ENCODE measurements at regions of chr14 and their contacts with region 1.

Region 1: DNA sequence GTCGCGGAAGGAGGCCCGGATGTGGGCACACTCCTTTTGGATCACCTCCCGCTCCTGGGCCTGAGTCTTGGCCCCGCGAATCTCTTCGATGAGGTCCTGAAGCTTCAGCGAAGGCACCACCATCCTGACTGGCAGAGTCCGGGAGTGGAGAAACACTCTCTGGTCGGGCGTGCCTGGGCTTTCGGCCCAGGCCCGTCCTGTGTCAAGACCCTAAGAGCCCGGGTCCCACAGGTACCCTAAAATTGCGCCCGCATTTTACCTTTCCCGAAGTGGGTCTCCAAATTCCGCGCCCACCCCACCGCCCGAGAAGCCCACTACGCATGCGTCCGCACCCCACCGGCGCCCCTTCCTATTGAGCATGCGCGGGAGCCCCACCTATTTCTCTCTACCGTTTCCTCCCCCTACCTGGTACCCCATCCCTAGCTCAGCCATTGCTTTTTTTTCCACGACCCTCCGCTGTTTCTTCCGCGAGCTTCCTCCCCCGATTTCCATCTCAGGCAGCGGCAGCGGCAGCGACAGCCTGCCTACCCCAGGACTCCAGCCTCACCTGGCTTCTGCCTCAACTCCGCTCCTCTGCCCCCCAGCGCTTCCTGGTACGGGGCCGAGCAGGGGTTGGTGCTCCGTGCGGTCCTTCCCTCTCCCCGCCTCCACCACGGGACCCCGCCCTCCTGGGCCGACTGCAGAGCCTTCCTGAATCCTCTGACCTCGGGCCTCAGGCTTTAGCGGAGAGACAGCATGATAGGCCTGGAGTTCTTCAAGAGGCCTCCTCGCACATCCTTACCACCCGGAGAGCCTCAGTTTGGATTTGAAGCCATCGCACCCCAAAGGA is at the start of gene AP1G2:
- DNase-seq: peak; percentile 69 to 94 (median 83)
- ATAC-seq: peak; percentile 91
- H3K4me3 ChIP-seq: peak within 1 kb of the TSS; percentile 75
- H3K4me3 Mint-ChIP-seq: peak within 1 kb of the TSS; percentile 99
- H3K27ac ChIP-seq: peak within 1 kb of the TSS; percentile 75 to 79
- H3K27ac Mint-ChIP-seq: peak within 1 kb of the TSS; percentile 96
- H3K4me1 ChIP-seq: peaks cover 40% of the 10 kb centered on the region
- H3K4me1 Mint-ChIP-seq: peaks cover 52% of the 10 kb centered on the region
- H3K27me3 ChIP-seq: no peaks in the 10 kb centered on the region
- H3K27me3 Mint-ChIP-seq: peaks cover 7% of the 10 kb centered on the region
- CTCF ChIP-seq: no peak
- total RNA-seq, gene AP1G2: 193 to 198 TPM

Region 2: DNA sequence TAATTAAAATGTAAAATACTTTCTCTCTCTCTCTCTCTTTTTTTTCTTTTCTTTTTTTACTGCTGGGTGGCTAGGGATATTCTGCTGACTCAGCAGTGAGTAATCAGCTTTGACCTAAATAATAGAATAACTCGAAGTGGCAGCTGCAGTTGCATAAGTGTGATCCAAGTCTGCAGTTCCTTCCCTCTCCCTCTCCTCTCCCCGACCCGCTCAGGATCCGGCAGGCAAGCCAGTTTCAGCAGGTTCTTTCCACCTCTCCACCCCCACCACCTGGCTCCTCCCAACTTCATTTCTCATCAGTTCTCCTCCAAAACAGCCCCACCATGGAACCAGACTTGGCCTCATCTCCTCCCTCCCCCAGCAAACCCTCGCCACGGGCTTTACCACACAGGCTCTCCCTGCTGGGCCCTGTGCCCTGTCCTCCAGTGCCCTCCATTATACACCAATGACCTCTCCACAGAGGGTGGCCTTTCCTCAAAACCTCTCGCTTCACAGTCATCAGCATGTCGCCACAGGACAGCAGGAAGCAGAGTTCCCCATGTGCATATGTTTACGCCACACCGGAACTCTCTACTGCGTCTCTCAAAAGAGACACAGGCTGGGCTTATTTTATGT is 406.4 kb before region 1 on chr14:
- CTCF ChIA-PET with region 1: no interaction called
- POLR2A ChIA-PET with region 1: no interaction called
- intact Hi-C with region 1: no loop called
- DNase-seq: peak in 3 of 14 experiments; percentile 12 to 62 (median 52)
- ATAC-seq: no peak
- H3K4me3 ChIP-seq: no peak overlapping the region
- H3K4me3 Mint-ChIP-seq: no peak overlapping the region
- H3K27ac ChIP-seq: no peak overlapping the region
- H3K27ac Mint-ChIP-seq: no peak overlapping the region
- H3K4me1 ChIP-seq: peaks cover 18% of the 10 kb centered on the region
- H3K4me1 Mint-ChIP-seq: peaks cover 14% of the 10 kb centered on the region
- H3K27me3 ChIP-seq: no peaks in the 10 kb centered on the region
- H3K27me3 Mint-ChIP-seq: no peaks in the 10 kb centered on the region
- CTCF ChIP-seq: no peak

Region 3: DNA sequence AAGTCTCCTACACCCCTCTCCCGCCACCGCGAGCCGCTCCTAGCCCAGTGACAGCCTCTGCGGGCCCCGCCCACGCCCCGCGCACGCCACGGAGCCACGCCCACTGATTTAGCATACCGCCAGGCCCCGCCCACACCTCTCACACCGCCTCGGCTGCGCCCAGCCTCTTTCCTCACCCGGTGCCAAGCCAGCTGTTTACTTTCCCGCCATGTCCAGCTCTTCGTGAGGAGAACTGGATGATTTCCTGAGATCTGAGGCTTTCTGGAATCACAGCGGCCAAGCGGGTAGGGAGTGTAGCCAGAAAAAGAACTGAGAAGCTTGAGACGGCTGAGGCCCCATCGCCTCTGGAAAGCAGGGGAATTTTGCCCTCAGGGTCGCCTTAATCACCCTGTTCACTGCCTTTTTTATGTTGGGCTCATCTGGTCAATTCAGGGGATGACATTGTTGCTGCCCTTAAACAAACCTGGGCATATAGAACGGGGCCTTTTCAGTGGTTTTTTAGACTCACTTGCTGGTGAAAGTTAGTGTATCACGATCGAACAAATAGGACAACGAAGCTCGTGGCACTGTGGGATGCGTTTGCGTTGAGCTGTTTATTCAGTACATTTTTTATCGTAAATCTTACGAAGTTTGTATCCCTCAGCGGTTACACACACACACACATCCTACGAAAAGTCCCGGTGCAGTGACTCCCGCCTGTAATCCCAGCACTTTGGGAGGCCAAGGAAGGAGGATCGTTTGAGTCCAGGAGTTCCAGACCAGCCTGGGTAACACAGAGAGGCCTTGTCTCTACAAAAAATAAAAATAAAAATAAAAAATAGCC is 329.4 kb before region 1 on chr14 and contains the start of gene RNF212B:
- CTCF ChIA-PET with region 1: no interaction called
- POLR2A ChIA-PET with region 1: no interaction called
- intact Hi-C with region 1: no loop called
- DNase-seq: peak; percentile 57 to 87 (median 72)
- ATAC-seq: peak; percentile 100
- H3K4me3 ChIP-seq: peak within 1 kb of the TSS; percentile 20
- H3K4me3 Mint-ChIP-seq: no peak within 1 kb of the TSS
- H3K27ac ChIP-seq: no peak within 1 kb of the TSS
- H3K27ac Mint-ChIP-seq: no peak within 1 kb of the TSS
- H3K4me1 ChIP-seq: peaks cover 8% of the 10 kb centered on the region
- H3K4me1 Mint-ChIP-seq: peaks cover 7% of the 10 kb centered on the region
- H3K27me3 ChIP-seq: peaks cover 0 to 10% of the 10 kb centered on the region in 2 experiments
- H3K27me3 Mint-ChIP-seq: peaks cover 46% of the 10 kb centered on the region
- CTCF ChIP-seq: no peak
- total RNA-seq, gene RNF212B: not detected

Region 4: GRCh38 chr14:23269193-23269592 is 298.2 kb before region 1 on chr14:
- CTCF ChIA-PET with region 1: no interaction called
- POLR2A ChIA-PET with region 1: no interaction called
- intact Hi-C with region 1: loop called in 1 of 2 experiments (anchors 5 kb)
- DNase-seq: no peak
- ATAC-seq: no peak
- H3K4me3 ChIP-seq: no peak overlapping the region
- H3K4me3 Mint-ChIP-seq: no peak overlapping the region
- H3K27ac ChIP-seq: no peak overlapping the region
- H3K27ac Mint-ChIP-seq: no peak overlapping the region
- H3K4me1 ChIP-seq: no peaks in the 10 kb centered on the region
- H3K4me1 Mint-ChIP-seq: no peaks in the 10 kb centered on the region
- H3K27me3 ChIP-seq: peaks cover 0 to 4% of the 10 kb centered on the region in 2 experiments
- H3K27me3 Mint-ChIP-seq: peaks cover 17% of the 10 kb centered on the region
- CTCF ChIP-seq: no peak

Region 5: DNA sequence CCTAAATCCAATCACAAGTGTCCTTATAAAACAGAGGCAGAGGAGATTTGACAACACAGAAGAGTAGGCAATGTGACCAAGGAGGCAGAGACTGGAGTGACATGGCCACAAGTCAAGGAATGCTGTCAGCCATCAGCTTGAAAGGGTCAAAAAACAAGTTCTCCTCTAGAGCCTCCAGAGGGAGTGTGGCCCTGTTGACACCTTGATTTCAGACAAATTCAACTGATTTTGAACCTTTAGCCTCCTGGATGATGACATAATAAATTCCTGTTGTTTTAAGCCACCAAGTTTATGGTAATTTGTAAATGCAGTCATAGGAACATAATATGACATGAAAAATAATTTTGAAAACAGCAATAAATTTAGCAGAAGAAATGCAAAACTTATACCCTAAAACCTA is 106.5 kb before region 1 on chr14:
- CTCF ChIA-PET with region 1: no interaction called
- POLR2A ChIA-PET with region 1: no interaction called
- intact Hi-C with region 1: no loop called
- DNase-seq: no peak
- ATAC-seq: no peak
- H3K4me3 ChIP-seq: no peak overlapping the region
- H3K4me3 Mint-ChIP-seq: no peak overlapping the region
- H3K27ac ChIP-seq: no peak overlapping the region
- H3K27ac Mint-ChIP-seq: no peak overlapping the region
- H3K4me1 ChIP-seq: no peaks in the 10 kb centered on the region
- H3K4me1 Mint-ChIP-seq: no peaks in the 10 kb centered on the region
- H3K27me3 ChIP-seq: peaks cover 2 to 7% of the 10 kb centered on the region in 2 experiments
- H3K27me3 Mint-ChIP-seq: peaks cover 25% of the 10 kb centered on the region
- CTCF ChIP-seq: no peak

Region 6: GRCh38 chr14:23478111-23478759 is 89.2 kb before region 1 on chr14:
- CTCF ChIA-PET with region 1: interaction called, 67 read pairs
- POLR2A ChIA-PET with region 1: interaction called, 4 read pairs
- intact Hi-C with region 1: loop called (anchors 1 kb)
- DNase-seq: peak; percentile 40 to 82 (median 61)
- ATAC-seq: peak; percentile 90
- H3K4me3 ChIP-seq: no peak overlapping the region
- H3K4me3 Mint-ChIP-seq: no peak overlapping the region
- H3K27ac ChIP-seq: no peak overlapping the region
- H3K27ac Mint-ChIP-seq: peak overlapping the region; percentile 1
- H3K4me1 ChIP-seq: no peaks in the 10 kb centered on the region
- H3K4me1 Mint-ChIP-seq: peaks cover 16% of the 10 kb centered on the region
- H3K27me3 ChIP-seq: no peaks in the 10 kb centered on the region
- H3K27me3 Mint-ChIP-seq: no peaks in the 10 kb centered on the region
- CTCF ChIP-seq: peak; percentile 70

Region 7: GRCh38 chr14:23681337-23681736 is 113.9 kb after region 1 on chr14:
- CTCF ChIA-PET with region 1: no interaction called
- POLR2A ChIA-PET with region 1: no interaction called
- intact Hi-C with region 1: no loop called
- DNase-seq: no peak
- ATAC-seq: no peak
- H3K4me3 ChIP-seq: no peak overlapping the region
- H3K4me3 Mint-ChIP-seq: no peak overlapping the region
- H3K27ac ChIP-seq: no peak overlapping the region
- H3K27ac Mint-ChIP-seq: no peak overlapping the region
- H3K4me1 ChIP-seq: no peaks in the 10 kb centered on the region
- H3K4me1 Mint-ChIP-seq: no peaks in the 10 kb centered on the region
- H3K27me3 ChIP-seq: peaks cover 3% of the 10 kb centered on the region in 2 experiments
- H3K27me3 Mint-ChIP-seq: peaks cover 12% of the 10 kb centered on the region
- CTCF ChIP-seq: no peak

Measured in CD4-positive, alpha-beta T cell (primary cell).